Naive thymus-derived CD4-positive, alpha-beta T cell (primary cell): ENCODE measurements at regions of chr4 and their contacts with region 1.

Region 1: DNA sequence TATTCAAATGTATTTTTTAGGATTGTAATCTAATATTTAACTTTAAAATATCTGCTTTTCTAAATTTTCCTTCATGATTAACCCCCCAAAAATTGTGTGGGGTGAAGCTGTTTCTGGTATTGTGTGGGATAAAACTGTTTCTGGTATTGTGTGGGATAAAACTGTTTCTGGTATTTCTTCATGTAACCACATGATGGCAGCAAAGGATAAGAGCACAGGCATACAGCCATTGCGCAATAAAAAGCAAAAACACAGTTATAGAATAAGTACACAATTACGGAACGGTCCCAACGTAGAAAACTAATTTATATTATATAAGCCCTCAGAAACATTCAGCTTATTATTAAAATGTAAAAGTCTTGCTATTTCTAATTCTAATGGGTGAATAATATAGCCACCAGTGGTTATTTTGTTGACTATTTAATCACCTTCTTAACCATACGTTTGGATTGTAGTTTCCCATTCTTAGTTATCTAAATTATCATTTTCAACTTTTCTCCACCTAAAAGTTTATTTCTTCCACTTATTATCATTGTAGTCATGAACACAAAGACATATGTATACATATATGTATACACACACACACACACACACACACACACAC is 333.9 kb upstream of the FSTL5 start:
- DNase-seq: peak in 6 of 9 donors; percentile 11 to 43 (median 30)
- ATAC-seq: peak; percentile 71
- H3K4me3 ChIP-seq: no peak overlapping the region
- H3K4me3 Mint-ChIP-seq: no peak overlapping the region
- H3K27ac ChIP-seq: no peak overlapping the region
- H3K27ac Mint-ChIP-seq: no peak overlapping the region
- H3K4me1 ChIP-seq: no peaks in the 10 kb centered on the region
- H3K4me1 Mint-ChIP-seq: no peaks in the 10 kb centered on the region
- H3K27me3 ChIP-seq: no peaks in the 10 kb centered on the region
- H3K27me3 Mint-ChIP-seq: peaks cover 0 to 11% (median 0%) of the 10 kb centered on the region in 5 donors

Region 2: GRCh38 chr4:161573836-161574235 is 923.8 kb before region 1 on chr4:
- CTCF ChIA-PET with region 1: no interaction called
- POLR2A ChIA-PET with region 1: no interaction called
- intact Hi-C with region 1: no loop called
- DNase-seq: no peak
- ATAC-seq: no peak
- H3K4me3 ChIP-seq: no peak overlapping the region
- H3K4me3 Mint-ChIP-seq: no peak overlapping the region
- H3K27ac ChIP-seq: no peak overlapping the region
- H3K27ac Mint-ChIP-seq: no peak overlapping the region
- H3K4me1 ChIP-seq: no peaks in the 10 kb centered on the region
- H3K4me1 Mint-ChIP-seq: peaks cover 0 to 1% (median 0%) of the 10 kb centered on the region in 7 donors
- H3K27me3 ChIP-seq: no peaks in the 10 kb centered on the region
- H3K27me3 Mint-ChIP-seq: no peaks in the 10 kb centered on the region

Region 3: GRCh38 chr4:161601011-161601410 is 896.7 kb before region 1 on chr4:
- CTCF ChIA-PET with region 1: no interaction called
- POLR2A ChIA-PET with region 1: no interaction called
- intact Hi-C with region 1: no loop called
- DNase-seq: no peak
- ATAC-seq: no peak
- H3K4me3 ChIP-seq: no peak overlapping the region
- H3K4me3 Mint-ChIP-seq: no peak overlapping the region
- H3K27ac ChIP-seq: no peak overlapping the region
- H3K27ac Mint-ChIP-seq: no peak overlapping the region
- H3K4me1 ChIP-seq: no peaks in the 10 kb centered on the region
- H3K4me1 Mint-ChIP-seq: no peaks in the 10 kb centered on the region
- H3K27me3 ChIP-seq: no peaks in the 10 kb centered on the region
- H3K27me3 Mint-ChIP-seq: no peaks in the 10 kb centered on the region

Region 4: DNA sequence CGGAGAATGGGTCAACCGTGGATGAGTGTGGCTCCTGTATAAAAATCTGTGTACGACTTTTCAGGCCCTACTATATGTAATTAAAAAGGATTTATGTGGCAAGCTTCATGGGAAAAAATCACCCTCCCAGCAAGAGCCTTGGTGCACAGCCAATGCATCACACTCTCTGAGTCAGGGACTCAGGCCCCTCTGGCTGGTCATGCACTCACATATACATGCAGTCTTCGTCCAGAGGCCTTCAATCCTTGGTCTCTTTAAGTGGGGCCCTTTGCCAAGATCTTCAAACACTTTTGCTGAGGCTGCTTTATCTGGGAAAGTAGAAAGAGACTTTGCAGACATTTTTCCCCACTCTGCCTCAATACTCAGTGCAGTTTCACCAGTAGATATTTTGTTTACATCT is 22.4 kb before region 1 on chr4:
- CTCF ChIA-PET with region 1: no interaction called
- POLR2A ChIA-PET with region 1: no interaction called
- intact Hi-C with region 1: no loop called
- DNase-seq: no peak
- ATAC-seq: no peak
- H3K4me3 ChIP-seq: no peak overlapping the region
- H3K4me3 Mint-ChIP-seq: no peak overlapping the region
- H3K27ac ChIP-seq: no peak overlapping the region
- H3K27ac Mint-ChIP-seq: no peak overlapping the region
- H3K4me1 ChIP-seq: no peaks in the 10 kb centered on the region
- H3K4me1 Mint-ChIP-seq: no peaks in the 10 kb centered on the region
- H3K27me3 ChIP-seq: no peaks in the 10 kb centered on the region
- H3K27me3 Mint-ChIP-seq: no peaks in the 10 kb centered on the region

Region 5: GRCh38 chr4:163042306-163042705 is 544.6 kb after region 1 on chr4:
- CTCF ChIA-PET with region 1: no interaction called
- POLR2A ChIA-PET with region 1: no interaction called
- intact Hi-C with region 1: loop called in 1 of 2 experiments (anchors 1 kb)
- DNase-seq: no peak
- ATAC-seq: no peak
- H3K4me3 ChIP-seq: no peak overlapping the region
- H3K4me3 Mint-ChIP-seq: no peak overlapping the region
- H3K27ac ChIP-seq: no peak overlapping the region
- H3K27ac Mint-ChIP-seq: no peak overlapping the region
- H3K4me1 ChIP-seq: no peaks in the 10 kb centered on the region
- H3K4me1 Mint-ChIP-seq: peaks cover 0 to 2% (median 0%) of the 10 kb centered on the region in 7 donors
- H3K27me3 ChIP-seq: no peaks in the 10 kb centered on the region
- H3K27me3 Mint-ChIP-seq: peaks cover 0 to 14% (median 10%) of the 10 kb centered on the region in 5 donors

Region 6: DNA sequence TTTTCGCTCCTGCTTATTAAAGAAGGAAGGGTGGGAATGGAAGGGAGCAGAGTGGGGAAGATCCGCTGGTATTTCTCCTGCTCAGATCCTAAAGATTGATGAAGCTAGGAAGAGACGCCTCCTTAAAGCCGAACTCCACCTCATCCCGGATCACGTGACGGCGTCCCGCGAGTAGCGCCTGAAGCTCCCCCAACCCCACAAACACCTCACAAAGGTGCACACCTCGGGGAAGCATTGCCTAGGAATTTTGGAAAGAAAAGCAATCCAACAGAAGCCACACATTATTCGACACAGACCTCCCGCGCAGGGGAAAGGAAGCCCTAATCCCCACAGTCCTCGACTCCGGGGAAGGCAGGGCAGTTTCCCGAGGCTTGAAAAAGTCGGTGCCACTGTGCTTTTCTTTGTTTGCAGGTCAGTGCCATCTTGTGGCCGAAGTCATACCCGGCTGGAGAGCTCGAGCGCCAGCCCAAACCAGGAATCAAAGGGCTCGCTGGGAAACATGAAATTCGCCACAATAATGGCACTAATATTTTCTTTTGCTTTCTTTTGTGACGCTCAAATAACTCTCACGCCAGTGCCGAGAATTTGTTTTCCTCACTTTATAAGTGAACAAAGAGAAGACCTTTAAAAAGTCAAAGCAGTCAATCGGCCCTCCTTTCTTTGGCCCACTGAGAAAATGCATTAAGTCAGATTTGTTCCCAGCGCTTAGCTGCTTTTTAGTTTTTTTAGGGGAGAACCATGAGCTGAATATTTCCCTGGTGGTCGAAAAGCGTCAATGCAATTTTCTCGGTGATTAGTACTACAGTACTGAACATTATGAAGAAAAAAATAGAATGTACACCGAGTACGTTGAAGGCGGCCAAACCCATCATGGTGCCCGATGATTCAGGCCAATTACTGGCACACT is 835.1 kb after region 1 on chr4 and contains the start of gene NPY1R:
- CTCF ChIA-PET with region 1: no interaction called
- POLR2A ChIA-PET with region 1: no interaction called
- intact Hi-C with region 1: loop called in 1 of 2 experiments (anchors 2 kb)
- DNase-seq: peak in 4 of 9 donors; percentile 5 to 27 (median 11)
- ATAC-seq: no peak
- H3K4me3 ChIP-seq: peak within 1 kb of the TSS; percentile 30
- H3K4me3 Mint-ChIP-seq: peak within 1 kb of the TSS; percentile 34 to 76 (median 66)
- H3K27ac ChIP-seq: no peak within 1 kb of the TSS
- H3K27ac Mint-ChIP-seq: no peak within 1 kb of the TSS
- H3K4me1 ChIP-seq: peaks cover 5 to 6% of the 10 kb centered on the region in 2 donors
- H3K4me1 Mint-ChIP-seq: peaks cover 5 to 18% (median 16%) of the 10 kb centered on the region in 7 donors
- H3K27me3 ChIP-seq: peaks cover 0 to 5% of the 10 kb centered on the region in 2 donors
- H3K27me3 Mint-ChIP-seq: peaks cover 56 to 70% (median 68%) of the 10 kb centered on the region in 5 donors
- total RNA-seq, gene NPY1R: not detected